Cardiac septum (tissue), 1 donor: ENCODE measurements at regions of chr3 and their contacts with region 1.

Region 1: GRCh38 chr3:101809178-101810021 is 30.4 kb downstream of the NXPE3 start:
- DNase-seq: no peak

Region 2: DNA sequence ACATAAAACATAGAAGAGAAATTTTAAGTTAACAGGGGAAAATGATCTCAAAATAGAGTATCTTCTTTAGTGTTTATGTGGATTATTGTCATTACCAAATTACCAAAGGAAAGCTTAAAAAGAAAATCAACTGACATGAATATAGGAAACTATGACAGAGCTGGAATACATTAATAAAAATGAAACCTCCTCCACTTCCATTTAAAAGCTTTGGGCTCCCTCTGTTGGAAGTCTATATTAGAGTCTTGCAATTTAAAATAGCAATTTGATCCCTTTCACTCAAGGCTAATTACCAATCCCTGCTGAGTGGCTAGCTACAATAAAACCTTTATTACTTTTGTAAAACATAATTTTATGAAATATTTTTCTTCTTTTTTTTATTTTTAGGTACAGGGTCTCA is 427.6 kb before region 1 on chr3:
- intact Hi-C with region 1: no loop called
- DNase-seq: no peak

Region 3: DNA sequence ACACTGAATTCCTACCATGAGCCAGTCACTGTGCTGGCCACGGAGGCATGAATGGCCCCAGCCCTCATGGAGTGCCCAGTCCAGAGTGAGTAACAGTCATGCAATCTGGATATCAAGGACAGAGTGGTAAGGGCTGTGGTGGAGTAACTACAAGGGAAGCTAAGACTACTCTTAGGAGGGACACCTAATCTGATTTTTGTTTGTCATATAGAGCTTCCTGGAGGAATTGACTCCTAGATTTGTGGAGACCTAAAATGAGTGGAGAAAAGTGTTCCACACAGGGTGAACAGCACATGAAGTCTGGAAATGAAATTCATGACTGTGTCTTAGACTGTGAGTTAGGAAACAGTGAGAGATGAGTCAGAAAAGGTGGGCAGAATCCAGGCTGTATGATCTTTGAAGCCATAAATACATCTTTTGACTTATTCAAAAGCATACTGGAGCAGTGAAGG is 259.8 kb after region 1 on chr3:
- intact Hi-C with region 1: no loop called
- DNase-seq: no peak

Region 4: GRCh38 chr3:102536456-102536855 is 727.1 kb after region 1 on chr3:
- intact Hi-C with region 1: loop called (anchors 5 kb)
- DNase-seq: no peak